HEK293 (cell line): ENCODE measurements at regions of chr2 and their contacts with region 1.

Region 1: GRCh38 chr2:105792561-105792960 is 47.8 kb downstream of the NCK2 start:
- H3K4me3 ChIP-seq: no peak overlapping the region
- H3K27ac ChIP-seq: no peak overlapping the region
- H3K4me1 ChIP-seq: peaks cover 22% of the 10 kb centered on the region
- CTCF ChIP-seq: no peak

Region 2: GRCh38 chr2:105576440-105577252 is 215.9 kb before region 1 on chr2:
- CTCF ChIA-PET with region 1: no interaction called
- POLR2A ChIA-PET with region 1: no interaction called
- H3K4me3 ChIP-seq: no peak overlapping the region
- H3K27ac ChIP-seq: no peak overlapping the region
- H3K4me1 ChIP-seq: no peaks in the 10 kb centered on the region
- CTCF ChIP-seq: no peak

Region 3: DNA sequence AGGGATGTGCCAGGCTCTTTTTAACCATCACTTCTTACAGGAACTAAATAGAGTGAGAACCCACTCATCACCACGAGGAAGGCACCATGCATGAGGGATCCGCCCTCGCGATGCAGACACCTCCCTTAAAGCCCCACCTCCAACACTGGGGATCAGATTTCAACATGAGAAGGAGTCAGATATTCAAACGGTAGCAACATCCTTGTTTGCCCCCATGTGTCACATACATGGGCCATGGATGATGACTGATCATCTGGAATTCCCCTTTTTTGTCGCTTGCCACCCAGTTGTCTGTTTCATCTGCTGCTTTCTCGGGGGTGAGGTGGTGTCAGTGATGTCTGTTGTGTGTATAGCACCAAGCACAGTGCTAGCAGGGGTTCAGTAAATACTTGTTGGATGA is 10.0 kb after region 1 on chr2:
- CTCF ChIA-PET with region 1: no interaction called
- POLR2A ChIA-PET with region 1: no interaction called
- H3K4me3 ChIP-seq: no peak overlapping the region
- H3K27ac ChIP-seq: no peak overlapping the region
- H3K4me1 ChIP-seq: peaks cover 24% of the 10 kb centered on the region
- CTCF ChIP-seq: no peak

Region 4: GRCh38 chr2:105969555-105969954 is 177.0 kb after region 1 on chr2:
- CTCF ChIA-PET with region 1: interaction called, 10 read pairs
- POLR2A ChIA-PET with region 1: no interaction called
- H3K4me3 ChIP-seq: no peak overlapping the region
- H3K27ac ChIP-seq: no peak overlapping the region
- H3K4me1 ChIP-seq: no peaks in the 10 kb centered on the region
- CTCF ChIP-seq: no peak